ENCODE measurements at regions of chr6 and their contacts with region 1.

Region 1: GRCh38 chr6:125020385-125020784 is 58.1 kb downstream of the RNF217 start:
- DNase-seq: no peak
- H3K4me3 ChIP-seq: no peak overlapping the region
- H3K27ac ChIP-seq: no peak overlapping the region
- H3K4me1 ChIP-seq: peaks cover 11% of the 10 kb centered on the region
- H3K27me3 ChIP-seq: no peaks in the 10 kb centered on the region
- CTCF ChIP-seq: no peak
- POLR2A ChIP-seq: no peak

Region 2: GRCh38 chr6:125066964-125067363 is 46.6 kb after region 1 on chr6:
- CTCF ChIA-PET with region 1: no interaction called
- POLR2A ChIA-PET with region 1: no interaction called
- dilution Hi-C with region 1: no loop called
- intact Hi-C with region 1: no loop called
- DNase-seq: no peak
- H3K4me3 ChIP-seq: no peak overlapping the region
- H3K27ac ChIP-seq: no peak overlapping the region
- H3K4me1 ChIP-seq: no peaks in the 10 kb centered on the region
- H3K27me3 ChIP-seq: no peaks in the 10 kb centered on the region
- CTCF ChIP-seq: no peak
- POLR2A ChIP-seq: no peak

Region 3: DNA sequence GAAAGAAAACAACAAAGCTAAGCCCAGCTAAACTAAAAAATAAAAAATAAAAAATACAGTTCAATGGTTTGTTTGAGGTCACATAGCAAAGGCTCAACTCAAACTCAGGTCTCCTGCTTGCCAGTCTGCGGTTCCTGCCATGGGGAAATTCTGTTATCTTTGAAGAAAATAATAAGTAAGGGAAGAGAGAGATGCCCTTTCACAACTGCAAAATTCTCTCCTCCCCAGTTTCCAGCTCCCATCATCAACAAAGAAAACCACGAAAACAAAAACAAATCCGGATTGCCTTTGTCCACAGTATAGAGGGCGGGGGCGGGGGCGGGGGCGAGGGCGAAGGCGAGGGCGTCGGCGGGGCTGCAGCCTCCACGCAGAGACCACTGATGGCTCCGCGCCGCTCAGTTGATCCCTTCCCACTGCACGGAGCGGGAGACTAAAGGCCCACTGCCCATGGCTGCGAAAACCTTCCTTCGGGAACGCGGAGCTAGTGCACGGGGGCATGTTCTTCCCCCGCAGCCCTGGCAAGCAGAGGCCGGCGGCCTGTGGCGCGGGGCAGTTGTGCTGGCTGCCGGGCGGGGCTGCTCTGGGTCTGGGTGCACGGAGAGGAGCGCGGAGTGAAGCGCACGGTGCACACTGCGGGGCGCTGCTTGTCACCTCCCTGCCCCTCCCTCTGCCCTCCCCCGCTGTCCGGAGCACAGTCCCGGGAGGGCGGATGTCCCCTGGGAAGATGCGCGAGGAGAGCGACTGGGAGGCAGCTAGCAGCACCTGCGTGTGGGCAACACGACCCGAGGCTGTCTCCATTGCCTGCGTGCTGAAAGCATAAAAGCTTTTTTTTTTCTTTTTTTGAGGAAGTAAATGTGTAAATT is 79.1 kb after region 1 on chr6:
- CTCF ChIA-PET with region 1: no interaction called
- POLR2A ChIA-PET with region 1: no interaction called
- dilution Hi-C with region 1: no loop called
- intact Hi-C with region 1: loop called (anchors 5 kb)
- DNase-seq: peak; percentile 60
- H3K4me3 ChIP-seq: peak overlapping the region; percentile 58 to 80 (median 63)
- H3K27ac ChIP-seq: peak overlapping the region; percentile 32
- H3K4me1 ChIP-seq: peaks cover 23% of the 10 kb centered on the region
- H3K27me3 ChIP-seq: no peaks in the 10 kb centered on the region
- CTCF ChIP-seq: no peak
- POLR2A ChIP-seq: no peak

Measured in endothelial cell of umbilical vein (primary cell).